Activated CD4-positive, alpha-beta memory T cell treated with anti-CD3 and anti-CD28 coated beads for 36 hours (primary cell): ENCODE measurements at regions of chr2 and their contacts with region 1.

Region 1: DNA sequence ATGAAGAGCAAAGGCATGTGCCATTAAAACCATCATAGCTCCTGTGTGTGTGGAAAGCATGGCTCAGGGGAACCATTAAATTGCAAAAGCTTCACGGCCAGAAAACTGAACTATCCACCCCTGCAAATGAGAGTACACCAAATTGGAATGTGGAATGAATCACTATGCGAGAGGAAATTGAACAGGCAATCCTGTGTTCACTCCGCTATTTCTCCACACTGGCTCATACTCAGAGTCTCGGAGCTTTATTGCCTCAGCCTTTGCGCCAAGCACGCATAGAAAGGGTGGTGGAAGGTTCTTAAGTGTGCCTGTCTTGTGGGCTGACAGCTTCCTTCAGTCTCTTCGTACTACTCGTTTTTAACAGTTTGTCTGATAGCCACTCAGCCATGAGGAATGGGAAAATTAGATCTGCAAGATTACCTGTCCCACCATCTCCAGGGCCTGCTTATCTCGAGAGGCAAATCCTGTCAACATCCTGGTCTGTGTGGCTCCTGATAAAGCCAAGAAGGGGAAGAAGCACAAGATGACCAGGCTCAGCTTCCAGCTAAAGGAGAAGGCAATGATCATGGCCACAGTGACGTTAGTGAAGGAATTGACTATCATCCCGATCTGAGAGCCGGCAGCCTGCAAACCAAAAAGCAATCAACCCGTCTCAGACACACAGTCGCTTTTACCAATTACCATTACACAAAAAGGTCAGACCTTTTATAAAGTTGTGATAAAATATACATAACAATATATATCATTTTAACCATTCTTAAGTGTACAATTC is 34.9 kb downstream of the G6PC2 start:
- DNase-seq: no peak
- H3K4me3 Mint-ChIP-seq: no peak overlapping the region
- H3K27ac Mint-ChIP-seq: no peak overlapping the region
- H3K4me1 Mint-ChIP-seq: peaks cover 4% of the 10 kb centered on the region
- H3K27me3 Mint-ChIP-seq: peaks cover 10% of the 10 kb centered on the region

Region 2: DNA sequence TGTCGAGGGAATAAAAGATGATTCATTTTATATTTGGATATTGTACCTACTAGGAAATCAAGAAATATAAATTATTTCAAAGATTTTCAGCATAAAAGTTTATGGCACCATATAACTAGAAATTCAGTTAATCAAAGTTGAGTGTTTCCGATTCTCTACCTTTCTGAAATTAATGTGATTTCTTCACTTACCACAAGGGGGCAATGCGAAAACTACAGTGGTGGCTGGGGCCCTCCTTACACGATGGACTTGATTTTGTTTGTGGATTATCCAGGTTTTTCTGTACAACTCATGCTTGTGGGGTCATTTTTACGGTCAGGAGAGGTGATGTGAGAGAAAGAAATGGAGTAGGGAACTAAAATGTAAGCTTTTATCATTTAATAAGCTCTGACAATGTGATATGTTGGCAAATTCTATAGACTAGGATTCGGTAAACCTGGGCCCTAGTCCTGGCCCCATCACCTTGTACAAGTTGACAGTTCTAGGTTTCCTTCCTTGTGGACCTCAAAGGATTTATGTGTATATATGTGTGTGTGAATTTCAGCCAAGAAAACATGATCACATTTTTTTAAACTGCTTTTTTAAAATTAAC is 12.7 kb after region 1 on chr2:
- CTCF ChIA-PET with region 1: interaction called, 12 read pairs
- POLR2A ChIA-PET with region 1: no interaction called
- intact Hi-C with region 1: no loop called
- DNase-seq: peak; percentile 10
- H3K4me3 Mint-ChIP-seq: no peak overlapping the region
- H3K27ac Mint-ChIP-seq: no peak overlapping the region
- H3K4me1 Mint-ChIP-seq: no peaks in the 10 kb centered on the region
- H3K27me3 Mint-ChIP-seq: peaks cover 3% of the 10 kb centered on the region